SK-MEL-5 (cell line): ENCODE measurements at regions of chr9 and their contacts with region 1.

Region 1: DNA sequence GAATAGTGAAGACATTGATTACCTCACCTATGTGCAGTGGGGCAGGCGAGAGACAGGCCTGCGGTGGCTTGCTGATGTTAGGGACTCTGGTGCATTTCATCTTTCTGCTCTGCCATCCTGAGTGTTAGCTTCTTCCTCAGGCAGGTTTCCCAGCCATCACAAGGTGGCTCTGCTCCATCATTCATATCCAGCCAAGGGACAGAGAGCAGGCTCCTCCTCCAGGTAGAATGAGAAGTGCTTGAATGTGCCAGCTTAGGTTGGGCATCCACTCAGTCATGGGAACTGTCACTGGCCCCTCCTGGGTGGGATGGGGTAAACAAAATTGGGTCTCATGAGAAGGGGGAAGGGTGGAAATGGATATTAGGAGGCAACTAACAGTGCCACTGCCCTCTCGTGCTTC is 24.8 kb downstream of the GPR107 start:
- DNase-seq: peak; percentile 40

Region 2: DNA sequence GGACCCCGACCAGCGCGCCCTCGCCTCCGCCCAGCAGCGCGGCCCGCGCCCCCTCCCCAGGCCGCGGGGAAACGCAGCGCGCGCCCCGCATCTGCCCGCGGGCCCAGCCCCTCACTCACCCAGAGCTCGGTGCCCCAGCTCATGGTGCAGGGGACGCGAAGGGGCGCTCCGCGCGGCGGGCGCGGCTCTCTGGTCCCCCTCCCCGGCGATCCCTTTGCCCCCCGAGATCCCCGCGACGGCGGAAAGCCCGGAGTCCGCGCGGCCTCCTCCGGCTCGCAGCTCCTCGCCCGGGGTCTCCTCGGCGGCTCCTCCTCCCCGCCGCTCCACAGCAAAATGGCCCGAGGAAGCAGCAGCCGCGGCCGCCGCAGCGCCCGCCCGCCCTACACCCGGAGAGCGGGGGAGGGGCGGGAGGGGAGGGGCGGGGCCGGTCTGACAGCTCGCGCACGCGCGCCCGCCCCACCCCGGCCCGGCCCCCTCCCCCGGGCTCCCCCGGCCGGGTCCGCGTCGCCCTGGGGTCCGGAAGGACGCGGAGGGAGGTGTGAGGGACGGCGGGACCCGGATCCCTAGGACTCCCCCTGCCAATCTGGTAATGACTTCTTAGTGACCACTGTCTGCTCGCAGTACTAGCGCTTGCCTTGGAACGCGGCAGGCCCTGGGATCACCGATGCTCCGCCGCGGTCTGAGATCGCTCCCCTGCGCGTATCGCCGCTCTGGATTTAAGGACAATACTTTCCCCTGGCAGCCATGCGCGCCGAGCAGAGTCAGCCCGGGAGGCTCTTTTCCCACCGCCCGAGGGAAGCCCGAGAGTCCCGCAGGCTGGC is 35.5 kb before region 1 on chr9 and contains the start of gene FNBP1:
- in situ Hi-C with region 1: no loop called
- DNase-seq: peak; percentile 72
- total RNA-seq, gene FNBP1: 18.6 and 23.4 TPM in 2 replicates

Region 3: GRCh38 chr9:130265431-130266235 is 187.1 kb after region 1 on chr9 and contains the start of gene HMCN2:
- in situ Hi-C with region 1: loop called (anchors 25 kb)
- DNase-seq: no peak
- total RNA-seq, gene HMCN2: 0.03 TPM in 1 of 2 replicates, not detected in the other